Breast epithelium (tissue), 4 donors: ENCODE measurements at regions of chr1 and their contacts with region 1.

Region 1: GRCh38 chr1:5456090-5456811 is 536.0 kb downstream of the NPHP4 start:
- DNase-seq: no peak
- H3K4me3 ChIP-seq: no peak overlapping the region
- H3K27ac ChIP-seq: no peak overlapping the region
- H3K4me1 ChIP-seq: no peaks in the 10 kb centered on the region
- H3K27me3 ChIP-seq: peaks cover 0 to 39% of the 10 kb centered on the region in 2 donors
- CTCF ChIP-seq: no peak
- POLR2A ChIP-seq: no peak

Region 2: GRCh38 chr1:5481889-5482288 is 25.6 kb after region 1 on chr1:
- intact Hi-C with region 1: loop called (anchors 1 kb)
- DNase-seq: no peak
- H3K4me3 ChIP-seq: no peak overlapping the region
- H3K27ac ChIP-seq: no peak overlapping the region
- H3K4me1 ChIP-seq: peaks cover 0 to 10% of the 10 kb centered on the region in 2 donors
- H3K27me3 ChIP-seq: peaks cover 0 to 30% of the 10 kb centered on the region in 2 donors
- CTCF ChIP-seq: no peak
- POLR2A ChIP-seq: no peak

Region 3: GRCh38 chr1:5504354-5504720 is 48.1 kb after region 1 on chr1:
- intact Hi-C with region 1: no loop called
- DNase-seq: no peak
- H3K4me3 ChIP-seq: no peak overlapping the region
- H3K27ac ChIP-seq: peak overlapping the region; percentile 63 to 64
- H3K4me1 ChIP-seq: peaks cover 0 to 12% of the 10 kb centered on the region in 2 donors
- H3K27me3 ChIP-seq: peaks cover 0 to 5% of the 10 kb centered on the region in 2 donors
- CTCF ChIP-seq: no peak
- POLR2A ChIP-seq: no peak